Prostate gland (tissue), 2 donors: ENCODE measurements at regions of chr17 and their contacts with region 1.

Region 1: GRCh38 chr17:50094753-50095619 is at the start of gene PDK2:
- DNase-seq: peak; percentile 96
- H3K4me3 ChIP-seq: peak within 1 kb of the TSS; percentile 76 to 80
- H3K27ac ChIP-seq: peak within 1 kb of the TSS; percentile 67 to 73
- H3K4me1 ChIP-seq: peaks cover 4% of the 10 kb centered on the region
- H3K27me3 ChIP-seq: no peaks in the 10 kb centered on the region
- CTCF ChIP-seq: peak in 2 of 4 experiments; percentile 34 to 43
- POLR2A ChIP-seq: peak; percentile 70
- total RNA-seq, gene PDK2: 47.1 to 79.5 TPM

Region 2: GRCh38 chr17:50151041-50151936 is 56.3 kb after region 1 on chr17:
- intact Hi-C with region 1: loop called (anchors 10 kb)
- DNase-seq: peak; percentile 86
- H3K4me3 ChIP-seq: peak overlapping the region; percentile 69 to 86
- H3K27ac ChIP-seq: peak overlapping the region; percentile 77 to 90
- H3K4me1 ChIP-seq: peaks cover 19% of the 10 kb centered on the region
- H3K27me3 ChIP-seq: no peaks in the 10 kb centered on the region
- CTCF ChIP-seq: peak; percentile 43 to 76 (median 56)
- POLR2A ChIP-seq: peak; percentile 73

Region 3: GRCh38 chr17:50297407-50297865 is 202.4 kb after region 1 on chr17:
- intact Hi-C with region 1: loop called (anchors 2 kb)
- DNase-seq: peak; percentile 81
- H3K4me3 ChIP-seq: no peak overlapping the region
- H3K27ac ChIP-seq: no peak overlapping the region
- H3K4me1 ChIP-seq: no peaks in the 10 kb centered on the region
- H3K27me3 ChIP-seq: no peaks in the 10 kb centered on the region
- CTCF ChIP-seq: peak; percentile 78 to 98 (median 92)
- POLR2A ChIP-seq: no peak